GM12878 (cell line): ENCODE measurements at regions of chr1 and their contacts with region 1.

Region 1: GRCh38 chr1:38026592-38027200 is 14.2 kb downstream of the UTP11 start:
- DNase-seq: no peak
- ATAC-seq: peak; percentile 14
- H3K4me3 ChIP-seq: no peak overlapping the region
- H3K27ac ChIP-seq: peak overlapping the region; percentile 43
- H3K4me1 ChIP-seq: peaks cover 52% of the 10 kb centered on the region
- H3K27me3 ChIP-seq: no peaks in the 10 kb centered on the region
- CTCF ChIP-seq: peak; percentile 65 to 83 (median 72)
- EP300 ChIP-seq: no peak
- POLR2A ChIP-seq: no peak
- RAD21 ChIP-seq: peak; percentile 86

Region 2: GRCh38 chr1:37323486-37324377 is 703.0 kb before region 1 on chr1:
- CTCF ChIA-PET with region 1: no interaction called
- POLR2A ChIA-PET with region 1: no interaction called
- RAD21 ChIA-PET with region 1: no interaction called
- SMC1A ChIA-PET with region 1: no interaction called
- in situ Hi-C with region 1: no loop called
- intact Hi-C with region 1: no loop called
- DNase-seq: no peak
- ATAC-seq: no peak
- H3K4me3 ChIP-seq: no peak overlapping the region
- H3K27ac ChIP-seq: no peak overlapping the region
- H3K4me1 ChIP-seq: no peaks in the 10 kb centered on the region
- H3K27me3 ChIP-seq: no peaks in the 10 kb centered on the region; a peak in 1 of 4 replicates
- CTCF ChIP-seq: peak; percentile 68 to 87 (median 74)
- EP300 ChIP-seq: no peak
- POLR2A ChIP-seq: no peak
- RAD21 ChIP-seq: peak; percentile 89

Region 3: GRCh38 chr1:37342736-37343135 is 684.0 kb before region 1 on chr1:
- CTCF ChIA-PET with region 1: no interaction called
- POLR2A ChIA-PET with region 1: no interaction called
- RAD21 ChIA-PET with region 1: no interaction called
- SMC1A ChIA-PET with region 1: no interaction called
- in situ Hi-C with region 1: no loop called
- intact Hi-C with region 1: no loop called
- DNase-seq: no peak
- ATAC-seq: no peak
- H3K4me3 ChIP-seq: no peak overlapping the region
- H3K27ac ChIP-seq: no peak overlapping the region
- H3K4me1 ChIP-seq: no peaks in the 10 kb centered on the region
- H3K27me3 ChIP-seq: no peaks in the 10 kb centered on the region; a peak in 1 of 4 replicates
- CTCF ChIP-seq: no peak
- EP300 ChIP-seq: no peak
- POLR2A ChIP-seq: no peak
- RAD21 ChIP-seq: no peak

Region 4: GRCh38 chr1:37828410-37829074 is 198.2 kb before region 1 on chr1:
- CTCF ChIA-PET with region 1: no interaction called
- POLR2A ChIA-PET with region 1: no interaction called
- RAD21 ChIA-PET with region 1: no interaction called
- SMC1A ChIA-PET with region 1: no interaction called
- in situ Hi-C with region 1: no loop called
- intact Hi-C with region 1: no loop called
- DNase-seq: no peak
- ATAC-seq: no peak
- H3K4me3 ChIP-seq: no peak overlapping the region
- H3K27ac ChIP-seq: no peak overlapping the region
- H3K4me1 ChIP-seq: no peaks in the 10 kb centered on the region
- H3K27me3 ChIP-seq: no peaks in the 10 kb centered on the region
- CTCF ChIP-seq: no peak
- EP300 ChIP-seq: no peak
- POLR2A ChIP-seq: no peak
- RAD21 ChIP-seq: no peak

Region 5: DNA sequence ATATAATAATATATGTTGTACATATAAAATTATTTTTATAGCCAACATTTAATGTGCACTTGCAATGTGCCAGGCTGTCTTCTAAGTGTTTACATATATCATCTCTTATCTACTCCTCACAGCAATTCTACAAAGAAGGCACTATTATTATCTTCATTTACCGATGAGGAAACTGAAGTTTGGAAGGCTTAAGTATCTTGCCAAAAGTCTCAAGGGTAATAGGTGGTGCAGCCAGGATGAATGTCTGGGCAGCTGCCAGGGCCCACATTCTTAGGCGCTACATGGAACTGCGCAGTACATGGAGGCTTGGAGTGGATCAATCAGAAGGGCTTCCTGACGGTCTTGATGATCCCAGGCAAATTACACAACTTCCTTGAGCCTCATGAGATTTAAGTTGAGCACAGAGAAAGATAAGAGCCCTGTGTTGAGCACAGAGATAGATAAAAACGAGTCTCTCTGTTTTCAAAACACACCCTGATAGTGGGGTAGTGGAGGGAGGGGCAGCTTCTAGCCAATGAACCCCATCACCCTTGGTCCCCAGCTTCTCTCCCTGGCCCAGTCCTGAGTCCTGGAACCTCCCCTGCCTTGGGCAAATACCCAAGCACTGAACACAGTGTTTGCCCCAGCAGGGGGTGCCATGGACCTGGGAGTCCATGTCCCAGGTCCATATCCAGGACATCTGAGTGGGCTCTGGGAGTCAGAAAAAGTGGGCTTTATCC is 10.7 kb after region 1 on chr1:
- CTCF ChIA-PET with region 1: interaction called, 52 read pairs
- POLR2A ChIA-PET with region 1: interaction called, 6 read pairs
- RAD21 ChIA-PET with region 1: interaction called, 17 read pairs
- SMC1A ChIA-PET with region 1: interaction called, 66 read pairs
- in situ Hi-C with region 1: no loop called
- intact Hi-C with region 1: no loop called
- DNase-seq: no peak
- ATAC-seq: peak; percentile 36; the same call in 2 of the 3 replicates
- H3K4me3 ChIP-seq: no peak overlapping the region
- H3K27ac ChIP-seq: no peak overlapping the region
- H3K4me1 ChIP-seq: no peaks in the 10 kb centered on the region
- H3K27me3 ChIP-seq: no peaks in the 10 kb centered on the region; a peak in 1 of 4 replicates
- CTCF ChIP-seq: peak in 2 of 3 experiments; percentile 11 to 47; a peak in 2 of 6 replicates
- EP300 ChIP-seq: no peak
- POLR2A ChIP-seq: no peak
- RAD21 ChIP-seq: peak; percentile 57

Region 6: GRCh38 chr1:38052750-38053410 is 26.2 kb after region 1 on chr1:
- CTCF ChIA-PET with region 1: interaction called, 22 read pairs
- POLR2A ChIA-PET with region 1: interaction called, 32 read pairs
- RAD21 ChIA-PET with region 1: interaction called, 61 read pairs
- SMC1A ChIA-PET with region 1: interaction called, 68 read pairs
- in situ Hi-C with region 1: no loop called
- intact Hi-C with region 1: no loop called
- DNase-seq: peak; percentile 58
- ATAC-seq: peak; percentile 85
- H3K4me3 ChIP-seq: no peak overlapping the region
- H3K27ac ChIP-seq: no peak overlapping the region
- H3K4me1 ChIP-seq: peaks cover 29% of the 10 kb centered on the region
- H3K27me3 ChIP-seq: no peaks in the 10 kb centered on the region
- CTCF ChIP-seq: no peak
- EP300 ChIP-seq: peak; percentile 54 to 71; a peak in 2 of 4 replicates
- POLR2A ChIP-seq: no peak
- RAD21 ChIP-seq: no peak

Region 7: DNA sequence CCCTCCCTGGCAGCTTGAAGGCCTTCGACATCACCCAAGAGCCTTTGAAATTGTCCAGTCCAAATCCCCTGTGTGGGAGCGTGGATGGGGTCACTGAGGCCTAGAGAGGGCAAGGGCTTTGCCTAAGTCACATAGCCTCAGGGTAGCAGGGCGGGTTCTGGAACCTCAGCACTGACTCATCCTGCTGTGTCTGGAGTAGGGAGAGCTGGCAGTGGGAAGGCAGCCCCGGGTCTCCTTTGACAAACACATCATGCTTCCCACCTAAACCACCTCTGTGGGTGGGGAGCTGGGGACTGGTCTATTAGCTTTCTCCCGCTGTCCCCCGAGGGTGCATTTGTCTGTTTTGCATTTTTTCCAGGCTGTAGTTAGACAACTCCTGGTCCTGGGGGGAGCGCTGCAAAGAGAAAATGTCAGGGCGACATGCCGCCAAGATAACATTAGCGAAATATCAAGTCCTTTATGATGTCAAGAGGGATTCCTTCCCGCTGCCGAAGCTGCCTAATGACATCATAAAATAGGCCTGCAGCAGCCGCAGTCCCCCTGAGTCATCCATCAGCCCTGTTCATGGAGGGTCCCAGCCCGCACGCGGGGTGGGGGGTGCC is 96.8 kb after region 1 on chr1:
- CTCF ChIA-PET with region 1: no interaction called
- POLR2A ChIA-PET with region 1: no interaction called
- RAD21 ChIA-PET with region 1: no interaction called
- SMC1A ChIA-PET with region 1: no interaction called
- in situ Hi-C with region 1: no loop called
- intact Hi-C with region 1: no loop called
- DNase-seq: no peak
- ATAC-seq: no peak
- H3K4me3 ChIP-seq: no peak overlapping the region
- H3K27ac ChIP-seq: no peak overlapping the region
- H3K4me1 ChIP-seq: no peaks in the 10 kb centered on the region
- H3K27me3 ChIP-seq: no peaks in the 10 kb centered on the region; a peak in 2 of 4 replicates
- CTCF ChIP-seq: no peak
- EP300 ChIP-seq: no peak
- POLR2A ChIP-seq: no peak
- RAD21 ChIP-seq: no peak

Region 8: GRCh38 chr1:38152351-38153065 is 125.8 kb after region 1 on chr1:
- CTCF ChIA-PET with region 1: interaction called, 9 read pairs
- POLR2A ChIA-PET with region 1: interaction called, 4 read pairs
- RAD21 ChIA-PET with region 1: interaction called, 14 read pairs
- SMC1A ChIA-PET with region 1: interaction called, 8 read pairs
- in situ Hi-C with region 1: no loop called
- intact Hi-C with region 1: loop called (anchors 1 kb)
- DNase-seq: peak; percentile 51
- ATAC-seq: peak; percentile 85
- H3K4me3 ChIP-seq: no peak overlapping the region
- H3K27ac ChIP-seq: no peak overlapping the region
- H3K4me1 ChIP-seq: peaks cover 11% of the 10 kb centered on the region
- H3K27me3 ChIP-seq: no peaks in the 10 kb centered on the region
- CTCF ChIP-seq: peak in 2 of 3 experiments; percentile 14 to 22; a peak in 1 of 6 replicates
- EP300 ChIP-seq: no peak
- POLR2A ChIP-seq: no peak
- RAD21 ChIP-seq: no peak

Region 9: GRCh38 chr1:38500352-38500751 is 473.7 kb after region 1 on chr1:
- CTCF ChIA-PET with region 1: interaction called, 8 read pairs
- POLR2A ChIA-PET with region 1: no interaction called
- RAD21 ChIA-PET with region 1: interaction called, 6 read pairs
- SMC1A ChIA-PET with region 1: interaction called, 5 read pairs
- in situ Hi-C with region 1: no loop called
- intact Hi-C with region 1: loop called (anchors 2 kb)
- DNase-seq: no peak
- ATAC-seq: peak; percentile 57; the same call in 2 of the 3 replicates
- H3K4me3 ChIP-seq: no peak overlapping the region
- H3K27ac ChIP-seq: no peak overlapping the region
- H3K4me1 ChIP-seq: peaks cover 4% of the 10 kb centered on the region
- H3K27me3 ChIP-seq: no peaks in the 10 kb centered on the region; a peak in 1 of 4 replicates
- CTCF ChIP-seq: peak in 2 of 3 experiments; percentile 53 to 58; a peak in 4 of 6 replicates
- EP300 ChIP-seq: no peak
- POLR2A ChIP-seq: no peak
- RAD21 ChIP-seq: peak; percentile 32

Region 10: DNA sequence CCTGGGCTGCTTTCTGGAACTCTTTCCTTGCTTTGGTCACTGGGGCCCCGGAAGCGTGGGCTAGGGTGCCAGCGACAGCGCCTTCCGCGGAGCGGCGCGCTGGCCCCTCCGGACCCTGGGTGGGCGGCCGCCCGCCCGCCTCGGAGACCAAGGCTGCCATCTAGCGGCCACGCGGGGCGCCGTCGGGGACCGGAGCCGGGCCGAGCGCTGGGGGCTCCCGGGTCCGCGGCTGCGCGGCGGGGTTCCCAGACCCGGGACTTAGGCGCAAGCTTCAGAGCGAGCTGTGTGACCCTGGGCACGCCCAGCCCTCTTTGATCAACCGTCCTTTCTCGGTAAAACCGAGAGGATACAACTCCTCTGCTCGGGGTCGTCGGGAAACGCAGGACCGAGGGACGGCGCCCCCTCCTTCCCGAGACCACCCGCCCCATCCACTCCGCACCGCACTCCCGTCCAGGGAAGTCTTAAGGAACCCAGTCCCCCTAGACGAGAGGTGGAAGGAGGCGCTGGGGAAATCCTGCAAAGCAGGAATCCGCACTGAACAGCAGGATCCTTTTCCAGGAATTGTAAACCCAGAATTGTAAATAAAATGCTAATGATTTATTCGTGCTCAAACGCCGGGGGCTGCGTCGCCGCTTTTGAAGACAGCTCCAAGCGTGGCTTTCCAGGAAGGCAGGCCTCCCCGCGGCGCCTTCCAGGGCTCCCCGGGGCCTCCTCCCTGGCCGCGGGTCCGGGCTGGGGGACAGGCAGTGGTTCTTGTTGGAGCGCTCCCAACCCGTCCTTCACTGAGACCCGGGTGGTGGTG is 791.7 kb after region 1 on chr1:
- CTCF ChIA-PET with region 1: interaction called, 20 read pairs
- POLR2A ChIA-PET with region 1: no interaction called
- RAD21 ChIA-PET with region 1: interaction called, 5 read pairs
- SMC1A ChIA-PET with region 1: interaction called, 5 read pairs
- in situ Hi-C with region 1: loop called (anchors 5 kb)
- intact Hi-C with region 1: no loop called
- DNase-seq: no peak
- ATAC-seq: peak; percentile 66
- H3K4me3 ChIP-seq: no peak overlapping the region
- H3K27ac ChIP-seq: no peak overlapping the region
- H3K4me1 ChIP-seq: peaks cover 11% of the 10 kb centered on the region
- H3K27me3 ChIP-seq: no peaks in the 10 kb centered on the region
- CTCF ChIP-seq: peak; percentile 63 to 71 (median 67); a peak in 5 of 6 replicates
- EP300 ChIP-seq: no peak
- POLR2A ChIP-seq: no peak
- RAD21 ChIP-seq: peak; percentile 69